ENCODE measurements at regions of chr7 and their contacts with region 1.

Region 1: DNA sequence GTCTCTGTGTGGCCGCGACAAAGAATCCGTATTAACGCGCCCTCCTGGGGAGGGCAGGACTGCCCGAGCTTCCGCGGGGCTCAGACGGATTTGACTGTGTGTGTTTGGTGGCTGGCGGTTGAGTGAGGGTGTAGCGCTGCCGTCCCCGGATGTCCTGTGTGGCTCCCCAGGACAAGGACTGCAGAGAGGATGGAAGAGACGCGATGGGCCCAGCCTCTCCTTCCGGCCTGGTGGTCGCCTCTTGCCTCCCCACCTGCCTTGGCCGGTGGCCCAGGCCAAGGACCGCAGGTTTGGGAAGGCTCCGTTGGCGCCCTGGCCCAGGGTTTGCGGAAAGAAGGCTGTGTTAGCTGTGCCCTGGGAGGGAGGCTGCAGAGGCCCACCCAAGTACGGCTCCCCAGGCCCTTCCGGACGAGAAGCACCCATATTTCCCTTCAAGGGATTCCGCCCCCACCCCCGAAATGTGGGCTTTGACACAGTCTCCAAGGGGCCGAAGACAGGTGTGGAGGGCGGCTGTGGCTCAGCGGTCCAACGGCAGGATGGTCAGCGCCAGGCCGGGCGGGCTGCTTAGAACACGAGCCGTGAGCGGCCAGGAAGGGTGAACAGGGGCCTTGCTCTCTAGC is 2.3 kb downstream of the UNCX start:
- DNase-seq: no peak
- H3K4me3 ChIP-seq: no peak overlapping the region
- H3K27ac ChIP-seq: no peak overlapping the region
- H3K4me1 ChIP-seq: peaks cover 0 to 15% (median 8%) of the 10 kb centered on the region in 4 donors
- H3K27me3 ChIP-seq: peaks cover 97% of the 10 kb centered on the region
- CTCF ChIP-seq: no peak
- EP300 ChIP-seq: no peak
- POLR2A ChIP-seq: no peak

Region 2: GRCh38 chr7:1412322-1413261 is 177.6 kb after region 1 on chr7:
- in situ Hi-C with region 1: no loop called
- intact Hi-C with region 1: loop called (anchors 10 kb)
- DNase-seq: peak; percentile 88
- H3K4me3 ChIP-seq: no peak overlapping the region
- H3K27ac ChIP-seq: no peak overlapping the region
- H3K4me1 ChIP-seq: peaks cover 0 to 8% (median 7%) of the 10 kb centered on the region in 4 donors
- H3K27me3 ChIP-seq: peaks cover 47% of the 10 kb centered on the region
- CTCF ChIP-seq: peak; percentile 62 to 87 (median 77)
- EP300 ChIP-seq: no peak
- POLR2A ChIP-seq: no peak

Measured in transverse colon (tissue), 4 donors.